ENCODE measurements at regions of chr9 and their contacts with region 1.

Region 1: DNA sequence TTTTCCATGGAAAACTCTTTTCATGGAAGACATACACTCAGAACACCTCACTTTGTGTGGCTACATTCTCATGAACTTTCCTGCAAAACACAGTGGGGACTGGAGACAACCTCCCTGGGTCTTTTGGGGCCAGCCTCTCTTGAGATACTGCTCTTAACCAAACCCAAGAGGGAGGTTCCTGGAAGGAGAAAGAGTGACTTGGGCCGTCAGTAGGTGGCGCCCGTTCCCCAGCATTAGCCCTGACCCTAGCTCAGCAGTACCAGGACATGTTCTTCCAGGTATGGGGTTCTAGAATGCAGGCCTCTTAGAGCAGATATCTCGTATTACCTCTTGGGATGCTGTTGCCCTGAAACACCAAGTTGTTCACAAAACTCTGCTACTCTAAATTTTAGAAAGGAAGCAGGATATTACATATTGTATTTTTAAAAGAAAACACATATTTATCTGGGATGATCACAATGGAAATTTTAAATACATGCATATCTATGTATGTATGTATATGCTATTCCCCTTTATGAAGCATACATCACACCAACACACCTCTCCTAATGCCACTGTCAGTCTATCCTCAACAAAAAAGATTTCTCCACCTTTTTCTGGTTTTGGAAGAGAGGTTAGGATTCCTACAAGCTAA is 15.8 kb upstream of the GLIS3 start:
- DNase-seq: peak; percentile 32
- ATAC-seq: peak; percentile 100
- H3K4me3 ChIP-seq: no peak overlapping the region
- H3K27ac ChIP-seq: no peak overlapping the region
- H3K4me1 ChIP-seq: no peaks in the 10 kb centered on the region
- H3K27me3 ChIP-seq: no peaks in the 10 kb centered on the region; a peak in 1 of 4 replicates
- CTCF ChIP-seq: peak; percentile 81 to 92 (median 91)
- EP300 ChIP-seq: no peak
- POLR2A ChIP-seq: no peak
- RAD21 ChIP-seq: peak; percentile 91

Region 2: GRCh38 chr9:4126180-4126865 is 189.4 kb before region 1 on chr9:
- CTCF ChIA-PET with region 1: no interaction called
- POLR2A ChIA-PET with region 1: no interaction called
- RAD21 ChIA-PET with region 1: no interaction called
- SMC1A ChIA-PET with region 1: no interaction called
- in situ Hi-C with region 1: no loop called
- intact Hi-C with region 1: no loop called
- DNase-seq: no peak
- ATAC-seq: no peak
- H3K4me3 ChIP-seq: no peak overlapping the region
- H3K27ac ChIP-seq: no peak overlapping the region
- H3K4me1 ChIP-seq: no peaks in the 10 kb centered on the region
- H3K27me3 ChIP-seq: no peaks in the 10 kb centered on the region
- CTCF ChIP-seq: no peak
- EP300 ChIP-seq: no peak
- POLR2A ChIP-seq: no peak
- RAD21 ChIP-seq: no peak

Region 3: DNA sequence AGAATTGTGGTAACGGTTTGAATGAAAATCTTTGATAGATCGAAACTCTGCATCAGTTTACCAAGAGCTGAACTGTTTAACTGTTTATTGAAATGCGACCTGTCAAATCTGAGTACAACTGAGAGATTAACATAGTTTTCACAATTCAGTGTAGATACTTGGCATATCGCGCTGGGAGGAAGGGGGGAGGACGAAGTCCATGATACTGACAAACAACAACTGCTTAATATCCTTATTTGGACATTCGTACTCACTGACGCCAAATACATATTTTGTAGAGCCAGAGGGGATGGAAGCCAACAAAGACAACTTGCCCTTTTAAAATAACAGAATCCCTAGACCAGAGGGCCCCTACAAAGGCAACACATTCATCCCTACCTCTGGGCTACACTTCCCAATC is 109.0 kb before region 1 on chr9:
- CTCF ChIA-PET with region 1: no interaction called
- POLR2A ChIA-PET with region 1: no interaction called
- RAD21 ChIA-PET with region 1: no interaction called
- SMC1A ChIA-PET with region 1: no interaction called
- in situ Hi-C with region 1: no loop called
- intact Hi-C with region 1: no loop called
- DNase-seq: no peak
- ATAC-seq: no peak
- H3K4me3 ChIP-seq: no peak overlapping the region
- H3K27ac ChIP-seq: no peak overlapping the region
- H3K4me1 ChIP-seq: no peaks in the 10 kb centered on the region
- H3K27me3 ChIP-seq: no peaks in the 10 kb centered on the region
- CTCF ChIP-seq: no peak
- EP300 ChIP-seq: no peak
- POLR2A ChIP-seq: no peak
- RAD21 ChIP-seq: no peak

Region 4: DNA sequence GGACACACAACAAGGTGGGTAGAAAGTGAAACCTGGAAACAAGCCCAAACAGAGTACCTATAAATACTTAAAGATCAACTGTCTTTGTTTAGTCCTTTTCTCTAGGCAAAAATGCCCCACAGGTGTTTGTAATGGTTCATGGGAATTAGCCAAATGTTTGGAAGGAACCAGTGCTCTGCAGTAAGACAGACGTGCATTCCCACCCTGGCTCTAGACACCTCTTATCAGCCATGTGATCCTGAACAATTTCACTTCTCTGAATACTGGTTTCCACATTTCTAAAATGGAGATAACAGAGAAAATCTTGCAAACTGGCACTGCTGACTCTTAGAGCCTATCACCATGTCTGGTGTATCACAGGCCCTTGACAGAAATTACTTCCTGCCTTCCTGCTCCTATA is 45.8 kb before region 1 on chr9:
- CTCF ChIA-PET with region 1: no interaction called
- POLR2A ChIA-PET with region 1: no interaction called
- RAD21 ChIA-PET with region 1: no interaction called
- SMC1A ChIA-PET with region 1: no interaction called
- in situ Hi-C with region 1: no loop called
- intact Hi-C with region 1: no loop called
- DNase-seq: no peak
- ATAC-seq: no peak
- H3K4me3 ChIP-seq: no peak overlapping the region
- H3K27ac ChIP-seq: no peak overlapping the region
- H3K4me1 ChIP-seq: no peaks in the 10 kb centered on the region
- H3K27me3 ChIP-seq: no peaks in the 10 kb centered on the region
- CTCF ChIP-seq: no peak
- EP300 ChIP-seq: no peak
- POLR2A ChIP-seq: no peak
- RAD21 ChIP-seq: no peak

Region 5: DNA sequence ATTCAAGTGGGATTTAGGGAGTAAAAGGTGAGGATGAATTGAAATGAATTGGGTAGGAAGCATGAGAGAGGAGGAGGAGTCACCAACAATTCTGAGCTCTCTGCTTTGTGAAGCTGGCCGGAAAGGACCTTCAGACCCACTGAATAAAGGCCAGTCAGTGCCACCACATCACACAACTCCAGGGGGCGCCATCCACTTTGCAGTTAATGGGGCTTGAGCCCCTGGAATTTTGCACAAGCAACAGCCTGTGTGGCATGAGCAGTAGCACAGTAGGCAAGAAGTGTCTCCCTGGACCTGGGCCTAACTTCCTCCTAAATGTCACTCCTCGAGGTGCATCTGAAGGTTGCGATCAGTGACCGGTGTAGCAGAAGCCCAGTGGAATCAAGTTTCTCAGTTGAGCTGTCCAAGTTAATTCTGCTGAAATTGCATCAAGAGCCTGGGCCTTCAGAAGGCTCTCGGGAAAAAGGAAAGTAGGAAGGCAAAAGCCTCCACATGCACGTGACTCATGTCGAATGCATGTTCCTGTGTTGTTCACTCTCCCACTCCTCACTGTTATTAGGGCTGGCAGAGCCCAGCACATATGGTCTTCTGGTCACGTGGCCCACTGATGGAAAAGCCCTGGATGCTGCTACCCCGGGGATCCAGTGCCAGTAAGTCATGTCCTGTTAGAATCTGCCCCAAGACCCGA is 11.9 kb after region 1 on chr9:
- CTCF ChIA-PET with region 1: interaction called, 13 read pairs
- POLR2A ChIA-PET with region 1: no interaction called
- RAD21 ChIA-PET with region 1: interaction called, 3 read pairs
- SMC1A ChIA-PET with region 1: interaction called, 5 read pairs
- in situ Hi-C with region 1: no loop called
- intact Hi-C with region 1: no loop called
- DNase-seq: no peak
- ATAC-seq: no peak
- H3K4me3 ChIP-seq: no peak overlapping the region
- H3K27ac ChIP-seq: no peak overlapping the region
- H3K4me1 ChIP-seq: no peaks in the 10 kb centered on the region
- H3K27me3 ChIP-seq: no peaks in the 10 kb centered on the region
- CTCF ChIP-seq: peak in 1 of 3 experiments; percentile 15; a peak in 1 of 6 replicates
- EP300 ChIP-seq: no peak
- POLR2A ChIP-seq: no peak
- RAD21 ChIP-seq: no peak

Region 6: DNA sequence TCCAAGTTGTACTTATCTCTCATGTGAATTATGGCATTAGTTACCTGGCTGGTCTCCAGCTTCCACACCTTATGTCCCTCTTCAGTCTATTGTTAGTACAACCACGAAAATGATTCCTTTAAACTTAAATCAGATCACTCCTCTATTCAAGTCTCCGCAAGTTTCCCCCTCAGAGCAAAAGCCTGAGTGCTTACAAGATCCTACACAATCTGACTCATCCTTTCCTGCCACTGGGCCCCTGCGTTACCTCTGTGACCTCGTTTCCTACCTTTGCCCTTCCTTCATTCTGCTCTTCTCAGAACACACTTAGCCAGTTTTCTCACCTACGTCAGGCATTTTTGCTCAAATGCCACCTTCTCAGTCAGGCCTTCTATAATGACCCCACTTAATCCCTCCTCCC is 29.2 kb after region 1 on chr9:
- CTCF ChIA-PET with region 1: interaction called, 102 read pairs
- POLR2A ChIA-PET with region 1: no interaction called
- RAD21 ChIA-PET with region 1: interaction called, 14 read pairs
- SMC1A ChIA-PET with region 1: interaction called, 22 read pairs
- in situ Hi-C with region 1: no loop called
- intact Hi-C with region 1: no loop called
- DNase-seq: no peak
- ATAC-seq: no peak
- H3K4me3 ChIP-seq: no peak overlapping the region
- H3K27ac ChIP-seq: no peak overlapping the region
- H3K4me1 ChIP-seq: no peaks in the 10 kb centered on the region
- H3K27me3 ChIP-seq: no peaks in the 10 kb centered on the region
- CTCF ChIP-seq: no peak
- EP300 ChIP-seq: no peak
- POLR2A ChIP-seq: no peak
- RAD21 ChIP-seq: no peak

Region 7: DNA sequence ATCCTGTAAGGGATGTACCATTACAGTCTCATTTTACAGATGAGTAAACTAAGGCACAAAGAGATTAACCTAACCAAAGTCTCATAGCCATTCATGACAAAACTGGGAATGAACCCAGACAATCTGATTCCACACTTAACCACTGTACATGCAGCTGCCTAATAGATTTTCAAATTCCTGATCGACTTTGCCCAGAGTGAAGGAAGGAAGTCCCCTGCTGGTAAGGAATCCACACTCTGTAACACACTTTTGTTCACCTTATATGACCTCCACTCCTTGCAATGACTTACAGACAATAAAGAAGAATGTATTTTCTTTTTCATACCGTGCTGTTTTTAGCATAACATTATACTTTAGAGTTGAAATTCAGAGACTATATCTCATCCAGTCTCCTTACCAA is 315.1 kb after region 1 on chr9:
- CTCF ChIA-PET with region 1: no interaction called
- POLR2A ChIA-PET with region 1: no interaction called
- RAD21 ChIA-PET with region 1: no interaction called
- SMC1A ChIA-PET with region 1: no interaction called
- in situ Hi-C with region 1: no loop called
- intact Hi-C with region 1: loop called (anchors 5 kb)
- DNase-seq: no peak
- ATAC-seq: no peak
- H3K4me3 ChIP-seq: no peak overlapping the region
- H3K27ac ChIP-seq: no peak overlapping the region
- H3K4me1 ChIP-seq: no peaks in the 10 kb centered on the region
- H3K27me3 ChIP-seq: no peaks in the 10 kb centered on the region
- CTCF ChIP-seq: no peak
- EP300 ChIP-seq: no peak
- POLR2A ChIP-seq: no peak
- RAD21 ChIP-seq: no peak